H1 (cell line): ENCODE measurements at regions of chr11 and their contacts with region 1.

Region 1: DNA sequence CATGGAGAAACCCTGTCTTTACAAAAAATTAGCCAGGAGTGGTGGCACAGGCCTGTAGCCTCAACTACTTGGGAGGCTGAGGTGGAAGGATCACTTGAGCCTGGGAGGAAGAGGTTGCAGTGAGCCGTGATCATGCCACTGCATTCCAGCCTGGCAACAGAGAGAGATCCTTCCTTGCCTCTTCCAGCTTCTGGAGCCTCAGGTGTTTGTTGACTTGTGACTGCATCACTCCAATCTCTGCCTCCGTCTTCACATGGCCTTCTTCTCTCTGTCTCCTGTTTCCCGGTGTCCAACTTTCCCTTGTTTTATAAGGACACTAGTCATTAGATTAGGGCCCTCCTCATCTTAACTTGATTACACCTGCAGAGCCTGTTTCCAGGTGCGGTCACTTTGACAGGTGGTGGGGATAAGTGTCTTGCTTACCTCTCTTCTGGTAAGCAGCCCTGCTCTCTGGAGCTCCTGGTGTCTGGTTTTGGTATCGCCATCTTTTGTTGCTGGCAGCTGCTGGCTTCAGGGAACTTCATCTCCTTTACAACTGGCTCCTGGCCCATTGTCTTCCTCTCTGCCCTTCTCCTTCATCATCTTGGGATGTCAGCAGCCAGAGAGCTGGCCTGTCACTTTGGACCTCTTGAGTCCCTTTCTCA is 8.2 kb upstream of the USP2 start:
- DNase-seq: peak in 1 of 2 experiments; percentile 83
- H3K4me3 ChIP-seq: no peak overlapping the region
- H3K27ac ChIP-seq: no peak overlapping the region
- H3K4me1 ChIP-seq: no peaks in the 10 kb centered on the region; a peak in 1 of 7 replicates
- H3K27me3 ChIP-seq: no peaks in the 10 kb centered on the region
- CTCF ChIP-seq: peak; percentile 63 to 84 (median 68)
- EP300 ChIP-seq: no peak
- POLR2A ChIP-seq: no peak
- RAD21 ChIP-seq: peak; percentile 41 to 59

Region 2: GRCh38 chr11:119284344-119285157 is 105.2 kb before region 1 on chr11:
- CTCF ChIA-PET with region 1: no interaction called
- POLR2A ChIA-PET with region 1: no interaction called
- DNase-seq: no peak
- H3K4me3 ChIP-seq: no peak overlapping the region
- H3K27ac ChIP-seq: no peak overlapping the region
- H3K4me1 ChIP-seq: no peaks in the 10 kb centered on the region
- H3K27me3 ChIP-seq: no peaks in the 10 kb centered on the region
- CTCF ChIP-seq: peak in 2 of 3 experiments; percentile 38 to 44; a peak in 2 of 4 replicates
- EP300 ChIP-seq: no peak
- POLR2A ChIP-seq: no peak
- RAD21 ChIP-seq: peak; percentile 55 to 62

Region 3: GRCh38 chr11:119373921-119374631 is 15.7 kb before region 1 on chr11:
- CTCF ChIA-PET with region 1: interaction called, 74 read pairs
- POLR2A ChIA-PET with region 1: no interaction called
- DNase-seq: peak in 1 of 2 experiments; percentile 97
- H3K4me3 ChIP-seq: no peak overlapping the region
- H3K27ac ChIP-seq: no peak overlapping the region
- H3K4me1 ChIP-seq: peaks cover 8 to 51% (median 36%) of the 10 kb centered on the region in 4 experiments
- H3K27me3 ChIP-seq: peaks cover 0 to 3% (median 0%) of the 10 kb centered on the region in 4 experiments; a peak in 1 of 7 replicates
- CTCF ChIP-seq: peak; percentile 82 to 92 (median 89)
- EP300 ChIP-seq: no peak
- POLR2A ChIP-seq: no peak
- RAD21 ChIP-seq: peak; percentile 92 to 95

Region 4: GRCh38 chr11:119403021-119403420 is 13.3 kb after region 1 on chr11:
- CTCF ChIA-PET with region 1: interaction called, 31 read pairs
- POLR2A ChIA-PET with region 1: interaction called, 4 read pairs
- DNase-seq: no peak
- H3K4me3 ChIP-seq: no peak overlapping the region
- H3K27ac ChIP-seq: no peak overlapping the region
- H3K4me1 ChIP-seq: no peaks in the 10 kb centered on the region
- H3K27me3 ChIP-seq: no peaks in the 10 kb centered on the region
- CTCF ChIP-seq: no peak
- EP300 ChIP-seq: no peak
- POLR2A ChIP-seq: no peak
- RAD21 ChIP-seq: no peak

Region 5: DNA sequence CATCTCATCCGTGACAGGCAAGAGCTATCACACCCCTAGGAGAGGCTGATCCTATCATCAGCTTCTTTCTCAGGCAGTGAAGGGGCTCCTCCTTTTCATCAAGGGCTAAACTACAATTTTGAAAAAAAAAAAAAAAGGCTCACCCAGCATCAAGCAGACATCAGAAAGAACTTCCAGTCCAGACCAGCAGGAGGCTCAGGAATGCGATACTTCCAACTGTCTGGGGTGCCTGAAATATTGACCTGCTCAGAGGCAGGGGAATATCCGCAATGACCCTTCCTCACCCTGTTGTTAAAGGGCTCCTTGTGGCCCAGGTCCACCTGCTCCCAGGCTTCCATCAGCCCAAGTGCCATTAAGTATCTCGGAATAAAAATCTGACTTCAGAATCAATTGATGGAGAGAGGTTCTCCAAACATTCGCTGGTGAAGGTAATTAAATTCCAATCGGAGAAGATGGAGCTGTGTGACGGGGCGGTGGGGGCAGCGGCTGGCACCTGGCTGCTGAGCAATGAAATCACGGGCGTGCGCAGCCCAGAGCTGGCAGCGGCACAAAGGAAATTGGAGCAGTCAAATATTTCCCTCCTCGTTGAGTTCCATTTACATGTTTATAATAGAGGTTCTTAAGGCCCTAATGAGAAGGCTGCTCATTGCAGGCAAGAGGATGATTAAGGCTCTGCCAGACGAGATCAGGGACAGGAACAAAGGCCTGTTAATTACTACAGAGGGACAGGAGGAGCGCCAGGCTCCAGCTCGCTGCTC is 102.2 kb after region 1 on chr11:
- CTCF ChIA-PET with region 1: no interaction called
- POLR2A ChIA-PET with region 1: no interaction called
- DNase-seq: no peak
- H3K4me3 ChIP-seq: no peak overlapping the region
- H3K27ac ChIP-seq: no peak overlapping the region
- H3K4me1 ChIP-seq: peaks cover 0 to 5% (median 2%) of the 10 kb centered on the region in 4 experiments; a peak in 5 of 7 replicates
- H3K27me3 ChIP-seq: no peaks in the 10 kb centered on the region
- CTCF ChIP-seq: peak in 1 of 3 experiments; percentile 13; a peak in 2 of 4 replicates
- EP300 ChIP-seq: no peak
- POLR2A ChIP-seq: no peak
- RAD21 ChIP-seq: peak in 1 of 2 experiments; percentile 38; a peak in 2 of 4 replicates

Region 6: GRCh38 chr11:119525180-119525866 is 135.6 kb after region 1 on chr11:
- CTCF ChIA-PET with region 1: no interaction called
- POLR2A ChIA-PET with region 1: no interaction called
- DNase-seq: no peak
- H3K4me3 ChIP-seq: no peak overlapping the region
- H3K27ac ChIP-seq: no peak overlapping the region
- H3K4me1 ChIP-seq: no peaks in the 10 kb centered on the region; a peak in 1 of 7 replicates
- H3K27me3 ChIP-seq: no peaks in the 10 kb centered on the region
- CTCF ChIP-seq: no peak
- EP300 ChIP-seq: no peak
- POLR2A ChIP-seq: no peak
- RAD21 ChIP-seq: no peak